GM13976 (cell line): ENCODE measurements at regions of chr18 and their contacts with region 1.

Region 1: GRCh38 chr18:3451183-3451988 is 1.4 kb downstream of the TGIF1 start:
- DNase-seq: peak; percentile 62
- CTCF ChIP-seq: no peak

Region 2: DNA sequence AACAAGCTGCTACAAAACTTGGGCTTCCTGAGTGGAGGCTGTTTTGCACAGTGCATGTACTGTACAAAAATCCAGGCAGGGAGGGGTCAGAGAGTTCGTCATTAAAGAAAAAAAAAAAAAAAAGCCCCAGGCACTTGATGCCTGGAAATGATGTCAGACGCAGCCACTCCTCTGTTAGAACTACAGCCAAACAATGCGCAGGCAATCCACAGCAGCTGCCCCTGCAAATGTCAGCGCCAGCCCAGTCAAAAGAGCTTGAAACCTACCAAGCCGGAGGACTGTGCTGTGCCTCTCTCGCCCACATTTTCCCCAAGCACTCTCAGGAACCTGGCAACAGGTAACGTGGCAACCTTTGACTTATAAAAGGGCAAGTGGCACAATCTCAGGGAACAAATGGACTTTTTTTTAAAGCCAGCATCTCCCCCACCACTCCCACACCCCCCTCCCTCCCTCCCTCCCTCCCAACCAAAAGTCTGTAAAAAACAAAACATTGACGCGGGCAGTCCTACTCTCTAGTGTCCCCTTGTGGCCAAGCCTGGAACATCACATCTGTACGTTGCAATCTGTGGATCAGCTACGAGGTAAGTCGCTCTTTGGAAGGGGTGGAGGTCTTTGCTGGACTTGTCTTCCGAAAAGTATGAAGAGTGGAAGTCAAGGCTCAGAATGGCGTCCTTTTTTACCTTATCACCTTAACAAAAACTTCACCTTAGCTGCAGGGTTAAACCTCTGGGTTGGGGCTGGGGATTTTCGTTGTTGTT is 142.7 kb after region 1 on chr18:
- in situ Hi-C with region 1: loop called (anchors 10 kb)
- DNase-seq: peak; percentile 73
- CTCF ChIP-seq: peak; percentile 85